ENCODE measurements at regions of chr15 and their contacts with region 1.

Region 1: DNA sequence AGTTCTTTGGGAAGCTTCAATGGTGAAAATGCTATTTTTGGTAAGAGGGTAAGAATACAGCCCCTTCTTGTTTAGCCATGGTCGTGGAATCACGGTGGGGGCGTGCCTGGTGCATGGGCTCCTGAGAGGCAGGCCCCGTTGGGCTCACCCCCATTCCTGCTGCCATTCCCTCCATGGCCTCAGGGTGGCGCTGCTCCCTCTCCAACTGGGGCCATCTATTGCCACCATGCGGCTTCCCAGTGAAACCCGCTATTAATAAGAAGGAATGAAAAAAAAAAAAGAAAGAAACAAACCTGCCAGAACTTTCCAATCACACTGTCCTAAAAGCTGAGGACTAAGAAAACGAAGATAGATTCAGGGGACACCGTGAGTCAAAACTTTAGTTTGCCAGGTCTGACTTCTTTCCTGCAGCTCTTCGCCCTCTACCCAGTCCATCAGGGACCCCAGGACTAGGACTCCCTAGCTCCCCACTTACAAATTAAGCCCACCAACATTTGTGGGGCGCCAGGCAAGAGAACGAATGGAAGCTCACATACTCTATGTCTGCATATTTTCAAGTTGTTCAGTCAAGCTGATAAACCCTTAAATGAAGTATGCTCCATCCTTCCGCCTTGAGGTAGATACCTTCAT is 30.6 kb upstream of the ABHD2 start:
- DNase-seq: peak; percentile 6
- H3K4me3 ChIP-seq: no peak overlapping the region
- H3K27me3 ChIP-seq: no peaks in the 10 kb centered on the region
- CTCF ChIP-seq: peak; percentile 98

Region 2: GRCh38 chr15:89074402-89075012 is 16.9 kb after region 1 on chr15:
- CTCF ChIA-PET with region 1: interaction called, 10 read pairs
- POLR2A ChIA-PET with region 1: no interaction called
- DNase-seq: no peak
- H3K4me3 ChIP-seq: no peak overlapping the region
- H3K27me3 ChIP-seq: no peaks in the 10 kb centered on the region
- CTCF ChIP-seq: no peak

Region 3: DNA sequence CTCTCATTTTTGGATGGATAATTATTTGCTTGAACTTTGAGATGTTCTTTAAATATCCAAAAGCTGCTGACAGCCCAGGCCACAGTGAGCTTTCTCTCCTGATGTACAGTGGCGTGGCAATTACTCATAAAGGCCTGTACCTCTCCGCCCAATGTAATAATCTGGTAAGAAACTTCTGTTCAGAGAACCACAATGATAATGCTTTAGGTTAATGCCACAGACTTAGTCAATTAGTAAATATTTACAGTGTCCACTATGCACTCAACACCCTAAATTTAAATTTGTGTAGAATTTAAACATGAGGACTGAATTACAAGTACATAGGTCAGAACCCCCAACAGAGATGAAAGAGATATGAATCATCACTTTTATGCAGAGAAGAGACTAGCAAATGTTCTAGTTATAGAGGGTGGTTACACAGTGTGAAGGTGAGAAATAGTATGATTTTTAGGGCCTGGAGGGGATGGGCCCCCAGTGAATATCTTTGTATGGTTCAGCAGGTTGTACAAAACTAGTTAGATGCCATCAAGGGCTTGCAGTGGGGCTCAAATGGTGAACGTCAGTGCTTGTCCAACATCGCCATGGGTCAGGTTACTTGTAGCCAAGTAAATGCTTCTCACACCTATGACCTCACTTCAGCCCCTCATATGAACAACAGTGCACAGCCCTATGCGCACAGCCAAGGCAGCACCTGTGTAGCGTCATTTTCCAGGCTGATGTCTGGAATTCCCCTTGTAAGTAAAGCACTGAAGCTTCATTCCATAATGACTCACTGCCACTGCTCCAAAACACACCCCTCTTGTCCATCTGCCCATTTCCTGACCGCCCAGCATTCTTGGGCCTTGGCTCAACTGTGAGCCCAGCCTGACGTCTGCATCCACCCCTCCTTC is 43.9 kb after region 1 on chr15:
- CTCF ChIA-PET with region 1: interaction called, 22 read pairs
- POLR2A ChIA-PET with region 1: no interaction called
- DNase-seq: peak; percentile 90
- H3K4me3 ChIP-seq: no peak overlapping the region
- H3K27me3 ChIP-seq: no peaks in the 10 kb centered on the region
- CTCF ChIP-seq: no peak

Region 4: GRCh38 chr15:89143503-89144162 is 86.0 kb after region 1 on chr15:
- CTCF ChIA-PET with region 1: interaction called, 12 read pairs
- POLR2A ChIA-PET with region 1: no interaction called
- DNase-seq: peak; percentile 76
- H3K4me3 ChIP-seq: no peak overlapping the region
- H3K27me3 ChIP-seq: no peaks in the 10 kb centered on the region
- CTCF ChIP-seq: no peak

Region 5: GRCh38 chr15:89177633-89178306 is 120.2 kb after region 1 on chr15:
- CTCF ChIA-PET with region 1: interaction called, 306 read pairs
- POLR2A ChIA-PET with region 1: no interaction called
- DNase-seq: peak; percentile 21
- H3K4me3 ChIP-seq: no peak overlapping the region
- H3K27me3 ChIP-seq: no peaks in the 10 kb centered on the region
- CTCF ChIP-seq: peak; percentile 86